Aorta (tissue), 5 donors: ENCODE measurements at regions of chr4 and their contacts with region 1.

Region 1: DNA sequence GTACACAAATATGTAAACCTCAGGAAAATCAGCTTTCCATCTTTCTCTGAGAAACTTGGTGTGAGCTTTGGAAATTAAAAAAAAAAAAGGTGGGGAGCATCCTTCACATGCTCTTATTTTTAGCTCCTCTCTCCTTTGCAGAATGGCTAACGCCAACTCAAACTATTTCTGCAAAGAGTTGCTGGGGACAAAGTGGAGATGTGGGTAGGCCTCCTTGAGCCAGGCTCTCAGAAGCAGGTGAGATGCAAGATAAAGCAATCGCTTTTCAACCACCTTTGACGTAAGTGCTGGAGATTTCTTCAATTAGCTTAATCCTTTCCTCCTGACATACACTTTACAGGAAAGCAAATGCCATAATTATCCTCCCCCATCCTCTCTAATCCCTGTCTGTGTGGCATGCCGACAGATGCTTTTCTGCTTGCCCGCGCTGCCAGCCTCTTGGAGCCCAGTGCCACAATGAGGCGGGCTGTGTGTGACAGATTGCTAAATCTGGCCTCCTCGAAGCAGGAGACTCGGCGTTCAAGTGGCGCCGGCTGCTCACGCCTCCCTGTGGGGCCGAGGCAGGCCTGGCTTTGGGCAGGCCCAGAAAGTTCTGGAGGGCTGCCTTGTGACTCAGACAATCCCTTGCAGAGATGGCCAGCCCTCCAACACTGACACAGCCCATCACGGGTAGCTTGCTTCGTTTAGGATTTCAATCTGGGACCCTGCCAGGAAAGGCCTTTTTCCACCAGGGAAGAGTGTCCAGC is 64.9 kb upstream of the SOD3 start:
- DNase-seq: peak; percentile 93 to 94
- ATAC-seq: peak; percentile 92
- H3K4me3 ChIP-seq: no peak overlapping the region
- H3K27ac ChIP-seq: peak overlapping the region; percentile 31 to 73
- H3K4me1 ChIP-seq: peaks cover 5% of the 10 kb centered on the region in 2 donors
- H3K27me3 ChIP-seq: no peaks in the 10 kb centered on the region

Region 2: GRCh38 chr4:24315056-24315455 is 415.4 kb before region 1 on chr4:
- intact Hi-C with region 1: no loop called
- DNase-seq: no peak
- ATAC-seq: no peak
- H3K4me3 ChIP-seq: no peak overlapping the region
- H3K27ac ChIP-seq: no peak overlapping the region
- H3K4me1 ChIP-seq: no peaks in the 10 kb centered on the region
- H3K27me3 ChIP-seq: peaks cover 0 to 4% of the 10 kb centered on the region in 2 donors

Region 3: DNA sequence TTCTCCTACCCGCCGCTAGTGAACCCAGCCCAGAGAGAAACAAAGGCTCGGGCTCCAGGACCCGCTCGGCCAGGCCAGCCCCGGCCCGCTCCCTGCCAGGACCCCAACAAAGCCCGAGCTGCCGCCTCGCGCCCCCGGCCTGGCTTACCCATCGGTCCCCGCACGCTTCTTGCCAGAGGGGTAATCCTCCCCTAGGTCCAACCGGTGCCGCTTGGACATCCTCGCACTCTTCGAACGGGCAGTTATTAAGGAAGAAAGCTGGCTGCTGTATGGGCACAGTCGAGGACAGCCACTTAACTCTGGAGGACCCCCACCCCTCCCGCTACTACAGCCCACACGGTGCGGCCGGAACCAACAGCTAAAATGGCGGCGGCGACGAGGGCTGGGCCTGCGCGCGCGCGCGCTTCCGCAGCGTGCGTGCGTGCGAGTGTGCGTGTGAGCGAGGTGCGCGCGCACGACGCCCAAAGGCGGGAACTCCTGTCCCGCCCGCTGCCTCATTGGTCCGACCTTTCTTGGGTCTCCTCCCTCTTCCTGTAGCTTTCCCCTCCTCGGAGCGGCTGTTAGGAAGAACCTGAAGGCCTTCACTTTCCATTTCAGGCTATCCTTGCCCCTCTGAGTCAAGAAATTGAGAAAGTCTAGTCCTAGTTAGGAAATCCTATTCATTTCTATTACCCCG is 146.1 kb before region 1 on chr4 and contains the start of gene DHX15:
- intact Hi-C with region 1: loop called in 1 of 2 experiments (anchors 5 kb)
- DNase-seq: peak; percentile 97 to 98
- ATAC-seq: peak; percentile 99
- H3K4me3 ChIP-seq: peak within 1 kb of the TSS; percentile 88 to 98
- H3K27ac ChIP-seq: peak within 1 kb of the TSS; percentile 89 to 92
- H3K4me1 ChIP-seq: no peaks in the 10 kb centered on the region
- H3K27me3 ChIP-seq: no peaks in the 10 kb centered on the region
- total RNA-seq, gene DHX15: 107 to 113 TPM

Region 4: DNA sequence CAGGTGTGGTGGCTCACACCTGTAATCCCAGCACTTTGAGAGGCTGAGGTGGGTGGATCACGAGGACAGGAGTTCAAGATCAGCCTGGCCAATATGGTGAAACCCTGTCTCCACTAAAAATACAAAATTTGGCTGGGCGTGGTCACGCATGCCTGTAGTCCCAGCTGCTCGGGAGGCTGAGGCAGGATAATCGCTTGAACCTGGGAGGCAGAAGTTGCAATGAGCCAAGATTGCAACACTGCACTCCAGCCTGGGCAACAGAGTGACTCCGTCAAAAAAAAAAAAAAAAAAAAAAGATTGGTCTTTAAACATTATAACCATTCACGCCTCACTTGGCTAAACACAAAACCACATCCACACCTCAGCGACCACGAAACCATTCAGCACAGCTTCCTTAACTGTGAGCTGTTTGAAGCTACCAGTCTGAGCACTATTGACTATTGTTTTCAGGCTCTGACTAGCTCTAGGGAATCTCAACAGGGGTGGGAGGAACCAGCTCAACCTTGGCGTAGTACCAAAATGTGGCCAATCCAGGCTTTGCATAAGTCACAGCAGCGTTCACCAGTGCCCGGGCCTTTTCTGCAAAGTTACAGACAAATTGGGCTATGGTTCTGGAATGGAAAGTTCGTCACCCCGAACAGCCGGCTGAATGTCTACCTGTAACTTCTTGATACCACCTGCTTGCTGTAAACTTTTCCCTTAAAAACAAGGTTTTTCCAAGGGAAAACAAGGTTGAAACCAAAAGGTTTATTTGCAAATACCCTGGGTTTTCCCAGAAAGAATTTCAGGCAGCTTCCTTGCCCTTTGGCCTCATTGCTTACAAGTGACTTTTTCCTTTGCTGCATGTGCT is 72.4 kb before region 1 on chr4:
- intact Hi-C with region 1: no loop called
- DNase-seq: peak in 1 of 2 donors; percentile 50
- ATAC-seq: no peak
- H3K4me3 ChIP-seq: no peak overlapping the region
- H3K27ac ChIP-seq: no peak overlapping the region
- H3K4me1 ChIP-seq: no peaks in the 10 kb centered on the region
- H3K27me3 ChIP-seq: no peaks in the 10 kb centered on the region

Region 5: DNA sequence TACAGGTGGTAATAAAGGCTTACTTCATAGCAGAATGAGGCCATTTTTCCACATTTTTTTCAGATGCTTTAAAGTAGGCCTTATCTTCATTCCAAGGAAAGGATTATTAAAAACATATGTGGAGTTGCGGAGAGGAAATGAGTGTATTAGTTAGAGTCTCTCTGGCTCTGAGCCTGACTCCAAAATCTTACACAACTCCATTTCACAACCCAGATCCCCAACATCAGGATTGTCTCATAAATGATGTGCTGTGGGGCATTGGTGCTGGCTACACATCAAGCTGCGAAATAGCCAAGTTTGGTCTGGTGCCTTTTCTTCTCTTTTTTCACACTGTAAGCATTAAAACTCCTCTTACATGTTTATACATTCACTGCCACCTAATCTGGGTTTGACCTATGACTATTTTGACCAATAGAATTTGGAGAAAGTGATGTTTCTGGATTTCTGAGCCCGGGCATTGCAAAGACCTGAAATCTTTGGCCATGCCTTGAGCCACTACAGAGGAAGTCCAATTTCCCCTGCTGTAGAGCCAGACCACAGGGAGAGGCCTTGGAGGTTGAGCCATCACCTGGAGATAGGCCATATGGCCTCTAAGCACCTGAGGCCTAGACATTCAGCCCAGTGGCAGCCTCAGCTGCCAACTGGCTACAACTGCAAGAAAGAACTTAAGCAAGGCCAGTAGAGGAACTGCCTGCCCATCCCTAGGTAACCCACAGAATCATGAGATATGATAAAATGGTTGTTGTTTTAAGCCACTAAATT is 48.2 kb after region 1 on chr4:
- intact Hi-C with region 1: loop called (anchors 5 kb)
- DNase-seq: peak in 1 of 2 donors; percentile 72
- ATAC-seq: peak; percentile 78
- H3K4me3 ChIP-seq: no peak overlapping the region
- H3K27ac ChIP-seq: peak overlapping the region in 1 of 2 donors; percentile 26
- H3K4me1 ChIP-seq: peaks cover 2 to 6% of the 10 kb centered on the region in 2 donors
- H3K27me3 ChIP-seq: no peaks in the 10 kb centered on the region

Region 6: DNA sequence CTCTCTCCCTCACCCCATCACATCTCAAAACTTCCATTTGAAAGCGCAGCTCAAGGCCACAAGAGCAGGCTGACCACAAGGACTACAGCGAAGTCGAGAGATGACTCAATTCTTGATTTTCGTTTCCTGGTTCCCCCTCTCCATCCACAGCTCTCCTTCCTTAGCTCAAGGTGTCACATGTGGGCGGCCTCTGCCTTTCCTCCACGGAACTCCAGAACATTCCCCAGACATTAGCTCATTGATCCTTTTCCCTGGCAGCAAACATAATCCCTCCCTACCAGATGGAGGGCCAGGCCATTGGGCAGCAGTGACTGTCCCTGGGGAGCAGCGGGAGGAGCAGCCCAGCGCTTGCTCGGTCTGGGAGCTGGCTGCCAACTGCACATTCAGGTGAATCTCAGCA is 126.2 kb after region 1 on chr4:
- intact Hi-C with region 1: loop called in 1 of 2 experiments (anchors 5 kb)
- DNase-seq: peak; percentile 76 to 85
- ATAC-seq: peak; percentile 62
- H3K4me3 ChIP-seq: no peak overlapping the region
- H3K27ac ChIP-seq: peak overlapping the region; percentile 64 to 70
- H3K4me1 ChIP-seq: peaks cover 5 to 22% of the 10 kb centered on the region in 2 donors
- H3K27me3 ChIP-seq: no peaks in the 10 kb centered on the region